ENCODE measurements at regions of chr14 and their contacts with region 1.

Region 1: GRCh38 chr14:99395909-99396530 is 84.6 kb downstream of the SETD3 start:
- DNase-seq: no peak
- H3K4me3 ChIP-seq: no peak overlapping the region
- H3K27ac ChIP-seq: no peak overlapping the region
- H3K4me1 ChIP-seq: no peaks in the 10 kb centered on the region
- H3K27me3 ChIP-seq: no peaks in the 10 kb centered on the region
- CTCF ChIP-seq: no peak
- EP300 ChIP-seq: no peak
- POLR2A ChIP-seq: no peak

Region 2: GRCh38 chr14:99377951-99378350 is 18.1 kb before region 1 on chr14:
- in situ Hi-C with region 1: no loop called
- intact Hi-C with region 1: loop called (anchors 1 kb)
- DNase-seq: no peak
- H3K4me3 ChIP-seq: no peak overlapping the region
- H3K27ac ChIP-seq: no peak overlapping the region
- H3K4me1 ChIP-seq: peaks cover 0 to 2% (median 0%) of the 10 kb centered on the region in 4 donors
- H3K27me3 ChIP-seq: peaks cover 24% of the 10 kb centered on the region
- CTCF ChIP-seq: no peak
- EP300 ChIP-seq: no peak
- POLR2A ChIP-seq: no peak

Region 3: DNA sequence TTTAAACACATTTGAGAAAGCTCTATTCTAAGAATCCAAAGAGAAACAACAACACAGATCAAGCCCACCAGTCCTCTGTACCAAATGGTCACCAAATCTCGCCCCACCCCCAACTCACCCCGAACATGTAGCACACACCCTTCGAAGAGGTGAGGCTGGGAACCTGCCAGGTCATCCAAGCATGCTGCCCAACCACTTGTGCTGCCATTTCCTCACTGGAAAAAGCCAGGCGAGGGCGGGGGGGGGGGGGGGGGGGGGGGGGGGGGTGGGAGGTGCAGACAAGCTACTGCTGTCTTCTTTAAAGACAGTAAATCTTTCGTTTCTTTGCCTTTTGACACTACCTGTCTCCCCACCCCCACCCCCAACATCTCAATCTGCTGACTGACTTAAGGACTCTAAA is 24.7 kb after region 1 on chr14:
- in situ Hi-C with region 1: no loop called
- intact Hi-C with region 1: loop called (anchors 1 kb)
- DNase-seq: peak; percentile 55
- H3K4me3 ChIP-seq: no peak overlapping the region
- H3K27ac ChIP-seq: peak overlapping the region in 2 of 4 donors; percentile 69 to 80
- H3K4me1 ChIP-seq: peaks cover 0 to 56% (median 16%) of the 10 kb centered on the region in 4 donors
- H3K27me3 ChIP-seq: no peaks in the 10 kb centered on the region
- CTCF ChIP-seq: no peak
- EP300 ChIP-seq: no peak
- POLR2A ChIP-seq: no peak

Measured in transverse colon (tissue), 4 donors.